ENCODE measurements at regions of chr1 and their contacts with region 1.

Region 1: DNA sequence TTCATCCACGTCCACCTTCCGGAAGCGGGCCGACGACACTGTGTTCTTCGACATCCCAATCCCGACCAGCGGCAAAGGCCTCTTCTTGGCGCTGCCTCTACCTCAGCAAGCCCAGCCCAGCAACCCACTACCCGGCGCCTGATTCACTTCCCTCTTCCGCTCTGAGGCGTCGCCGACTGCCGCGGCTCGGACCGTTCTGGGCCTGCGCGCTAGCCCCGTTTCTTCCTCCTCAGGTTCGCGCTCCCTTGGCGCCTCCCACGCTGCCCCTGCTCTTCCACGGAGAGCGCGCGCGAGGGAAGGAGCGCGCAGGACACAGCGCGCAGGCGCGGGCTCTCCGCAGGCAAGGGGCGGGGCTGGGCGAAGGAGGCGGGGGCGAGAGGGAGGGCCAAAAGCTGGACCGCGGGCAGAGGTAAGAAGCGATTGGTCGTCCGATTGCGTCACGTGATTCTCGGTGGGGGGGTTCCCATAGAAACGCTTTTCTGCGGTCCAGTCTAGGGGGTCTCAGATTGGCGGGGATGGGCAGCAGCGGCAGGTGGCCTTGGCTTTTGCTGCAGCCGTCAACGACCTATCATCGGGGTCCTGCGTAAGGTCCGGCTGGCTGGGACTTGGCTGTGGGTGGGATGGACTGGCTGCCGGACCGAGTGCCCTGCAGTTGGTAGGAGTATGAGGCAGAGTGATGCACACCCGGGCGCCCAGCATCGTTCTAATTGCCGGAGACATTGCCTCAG is at the start of gene ARPC5:
- DNase-seq: peak; percentile 97
- H3K4me3 Mint-ChIP-seq: peak within 1 kb of the TSS; percentile 98
- H3K27ac Mint-ChIP-seq: peak within 1 kb of the TSS; percentile 99
- H3K4me1 Mint-ChIP-seq: peaks cover 27% of the 10 kb centered on the region
- H3K27me3 Mint-ChIP-seq: no peaks in the 10 kb centered on the region
- total RNA-seq, gene ARPC5: 162 to 164 TPM

Region 2: GRCh38 chr1:183590244-183591191 is 45.3 kb before region 1 on chr1 and contains the start of gene NCF2:
- CTCF ChIA-PET with region 1: no interaction called
- intact Hi-C with region 1: loop called (anchors 1 kb)
- DNase-seq: peak; percentile 80
- H3K4me3 Mint-ChIP-seq: peak within 1 kb of the TSS; percentile 49
- H3K27ac Mint-ChIP-seq: peak within 1 kb of the TSS; percentile 93
- H3K4me1 Mint-ChIP-seq: peaks cover 42% of the 10 kb centered on the region
- H3K27me3 Mint-ChIP-seq: no peaks in the 10 kb centered on the region
- total RNA-seq, gene NCF2: 14.0 to 14.3 TPM

Region 3: GRCh38 chr1:183612407-183612806 is 23.4 kb before region 1 on chr1:
- CTCF ChIA-PET with region 1: no interaction called
- intact Hi-C with region 1: no loop called
- DNase-seq: no peak
- H3K4me3 Mint-ChIP-seq: no peak overlapping the region
- H3K27ac Mint-ChIP-seq: no peak overlapping the region
- H3K4me1 Mint-ChIP-seq: no peaks in the 10 kb centered on the region
- H3K27me3 Mint-ChIP-seq: peaks cover 6% of the 10 kb centered on the region

Region 4: GRCh38 chr1:183841950-183842794 is 206.4 kb after region 1 on chr1:
- CTCF ChIA-PET with region 1: no interaction called
- intact Hi-C with region 1: loop called (anchors 1 kb)
- DNase-seq: peak; percentile 58
- H3K4me3 Mint-ChIP-seq: peak overlapping the region; percentile 56
- H3K27ac Mint-ChIP-seq: peak overlapping the region; percentile 88
- H3K4me1 Mint-ChIP-seq: peaks cover 28% of the 10 kb centered on the region
- H3K27me3 Mint-ChIP-seq: no peaks in the 10 kb centered on the region

Region 5: GRCh38 chr1:183956559-183957188 is 320.9 kb after region 1 on chr1:
- CTCF ChIA-PET with region 1: no interaction called
- intact Hi-C with region 1: loop called (anchors 1 kb)
- DNase-seq: peak; percentile 71
- H3K4me3 Mint-ChIP-seq: no peak overlapping the region
- H3K27ac Mint-ChIP-seq: peak overlapping the region; percentile 86
- H3K4me1 Mint-ChIP-seq: no peaks in the 10 kb centered on the region
- H3K27me3 Mint-ChIP-seq: no peaks in the 10 kb centered on the region

Region 6: DNA sequence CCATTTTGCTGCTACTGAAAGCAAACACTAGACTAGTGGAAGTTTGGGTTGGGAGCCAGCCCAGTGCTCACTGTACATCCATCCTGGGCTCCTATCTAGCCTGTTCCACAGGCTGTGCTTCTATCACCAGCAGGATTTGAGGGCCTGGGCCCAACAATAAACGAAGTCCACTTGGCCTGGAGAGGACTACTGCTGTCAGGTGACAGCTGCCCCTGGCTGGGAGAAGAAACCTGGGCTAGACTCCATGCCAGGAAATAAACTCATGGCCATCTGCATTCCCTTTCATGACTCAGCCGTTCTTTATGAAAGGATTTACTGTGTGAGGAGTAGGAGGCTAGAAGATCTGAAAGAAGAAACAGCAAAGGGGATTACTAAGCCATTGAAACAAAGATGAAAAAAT is 366.3 kb after region 1 on chr1:
- CTCF ChIA-PET with region 1: no interaction called
- intact Hi-C with region 1: no loop called
- DNase-seq: no peak
- H3K4me3 Mint-ChIP-seq: no peak overlapping the region
- H3K27ac Mint-ChIP-seq: no peak overlapping the region
- H3K4me1 Mint-ChIP-seq: peaks cover 18% of the 10 kb centered on the region
- H3K27me3 Mint-ChIP-seq: no peaks in the 10 kb centered on the region

Region 7: DNA sequence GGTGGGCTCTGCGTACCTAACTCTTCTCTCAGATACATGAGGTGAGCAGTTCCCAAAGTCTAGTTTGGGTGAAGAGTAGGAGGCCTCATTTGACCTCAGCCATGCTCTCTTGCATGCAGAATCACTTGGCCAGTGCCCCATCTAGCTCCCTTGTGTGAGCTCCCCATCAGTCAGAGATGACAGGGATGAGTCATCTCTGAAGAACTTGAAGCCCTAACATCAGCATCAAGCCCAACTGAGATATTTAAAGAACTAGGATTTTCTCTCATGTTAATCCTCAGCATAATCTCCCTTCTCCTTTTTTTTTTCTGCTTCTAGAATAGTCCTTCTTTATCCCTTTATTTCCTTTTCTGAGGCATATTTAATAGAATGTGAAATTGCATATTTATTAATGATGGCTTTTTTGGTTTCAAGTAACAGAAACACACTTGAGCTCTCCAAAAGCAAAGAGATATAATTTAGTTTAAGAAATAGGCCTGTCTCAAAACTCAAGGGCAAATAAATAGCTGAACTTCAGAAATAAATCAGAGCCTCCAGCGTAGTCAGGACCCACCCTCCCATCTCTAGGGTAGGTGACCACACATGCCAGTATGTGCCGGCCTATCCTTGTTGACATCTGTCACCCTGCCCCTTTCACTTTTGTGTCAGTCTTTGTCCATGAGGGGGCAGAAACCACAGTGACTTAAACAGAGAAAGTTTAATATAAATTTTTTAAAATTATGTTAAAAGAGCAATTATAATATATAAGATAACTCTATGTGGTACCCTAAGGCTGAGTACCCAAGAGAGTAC is 528.1 kb after region 1 on chr1:
- CTCF ChIA-PET with region 1: no interaction called
- intact Hi-C with region 1: loop called (anchors 2 kb)
- DNase-seq: no peak
- H3K4me3 Mint-ChIP-seq: no peak overlapping the region
- H3K27ac Mint-ChIP-seq: no peak overlapping the region
- H3K4me1 Mint-ChIP-seq: no peaks in the 10 kb centered on the region
- H3K27me3 Mint-ChIP-seq: peaks cover 1% of the 10 kb centered on the region

Measured in activated naive CD4-positive, alpha-beta T cell treated with anti-CD3 and anti-CD28 coated beads for 36 hours (primary cell).